Motor neuron (in vitro differentiated cells): ENCODE measurements at regions of chr1 and their contacts with region 1.

Region 1: DNA sequence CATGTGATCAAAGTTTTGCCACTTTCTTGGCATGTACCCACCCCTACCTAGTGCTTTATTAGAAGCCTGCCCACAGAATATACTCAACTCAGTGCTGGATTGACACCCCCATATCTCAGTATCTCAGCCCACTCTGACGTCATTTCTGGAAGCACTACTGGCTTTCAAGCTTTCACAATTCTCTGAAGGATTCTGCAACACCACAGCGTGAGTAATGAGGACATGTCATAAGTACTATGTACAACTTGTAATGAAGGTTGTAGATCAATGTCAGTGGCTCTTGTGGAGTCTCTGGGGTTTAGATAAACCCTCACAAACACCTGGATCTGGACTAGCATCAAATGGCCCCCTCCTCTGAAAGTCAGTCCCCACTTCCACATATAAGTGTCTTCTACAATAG is 57.2 kb downstream of the TNFSF4 start:
- ATAC-seq: peak in 2 of 8 experiments; percentile 42 to 88
- H3K4me3 ChIP-seq: no peak overlapping the region
- H3K27ac ChIP-seq: no peak overlapping the region
- H3K4me1 ChIP-seq: no peaks in the 10 kb centered on the region

Region 2: DNA sequence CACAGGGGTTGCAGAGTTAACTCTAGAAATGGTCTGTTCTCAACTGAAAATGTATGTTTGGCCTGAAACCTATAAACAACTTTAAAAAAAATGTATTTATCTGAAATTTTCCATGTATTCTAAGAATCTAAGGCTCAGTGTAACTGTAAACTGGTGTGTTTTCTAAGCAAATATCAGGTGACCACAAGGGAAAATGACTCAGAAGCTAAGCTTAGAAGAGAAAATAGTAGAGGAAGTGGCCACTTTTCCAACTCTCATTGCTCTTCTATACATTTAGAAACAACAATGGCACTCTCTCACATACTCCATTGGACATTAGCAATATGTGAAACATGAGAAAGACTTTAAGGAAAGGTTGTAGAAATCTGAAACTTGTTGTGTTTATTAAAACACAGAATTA is 106.6 kb before region 1 on chr1:
- in situ Hi-C with region 1: loop called in 1 of 9 experiments (anchors 25 kb)
- ATAC-seq: no peak
- H3K4me3 ChIP-seq: no peak overlapping the region
- H3K27ac ChIP-seq: no peak overlapping the region
- H3K4me1 ChIP-seq: no peaks in the 10 kb centered on the region